ENCODE measurements at regions of chr2 and their contacts with region 1.

Region 1: DNA sequence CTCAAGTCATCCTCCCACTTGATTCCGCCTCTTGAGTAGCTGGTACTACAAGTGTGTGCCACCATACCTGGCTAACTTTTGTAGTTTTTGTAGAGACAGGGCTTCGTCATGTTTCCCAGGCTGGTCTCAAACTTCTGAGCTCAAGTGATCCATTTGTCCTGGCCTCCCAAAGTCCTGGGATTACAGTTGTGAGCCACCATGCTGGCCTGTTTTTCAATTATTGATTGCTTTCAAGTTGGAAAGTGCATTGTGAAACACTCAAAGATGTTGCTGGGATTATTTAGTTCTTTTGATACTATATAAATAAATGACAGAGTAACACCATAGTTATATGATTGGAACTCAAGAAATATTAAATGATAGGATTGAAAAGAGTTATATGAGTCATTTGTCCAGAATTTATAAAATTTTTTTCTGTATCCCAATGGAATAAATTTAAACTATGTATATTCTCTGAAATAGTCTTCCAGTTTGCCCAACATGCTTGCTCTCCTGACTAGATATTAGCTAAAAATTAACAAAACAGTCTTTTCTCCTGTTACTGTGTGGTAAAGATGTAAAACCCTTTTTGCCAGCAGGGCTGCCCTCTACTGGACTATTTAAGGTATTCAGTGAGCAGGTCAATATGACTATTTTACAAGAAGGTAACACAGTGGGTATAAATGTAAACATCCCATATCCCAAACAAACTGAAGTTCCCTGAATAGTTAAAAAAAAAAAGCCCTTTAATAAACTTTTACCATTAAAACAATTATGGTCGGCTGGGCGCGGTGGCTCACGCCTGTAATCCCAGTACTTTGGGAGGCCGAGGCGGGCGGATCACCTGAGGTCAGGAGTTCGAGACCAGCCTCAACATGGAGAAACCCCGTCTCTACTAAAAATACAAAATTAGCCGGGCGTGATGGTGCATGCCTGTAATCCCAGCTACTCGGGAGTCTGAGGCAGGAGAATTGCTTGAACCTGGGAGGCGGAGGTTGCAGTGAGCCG is 42.7 kb downstream of the ACSL3 start:
- DNase-seq: peak; percentile 52 to 73 (median 64)
- H3K4me3 ChIP-seq: no peak overlapping the region
- H3K27ac ChIP-seq: no peak overlapping the region
- H3K4me1 ChIP-seq: no peaks in the 10 kb centered on the region
- H3K27me3 ChIP-seq: no peaks in the 10 kb centered on the region

Region 2: DNA sequence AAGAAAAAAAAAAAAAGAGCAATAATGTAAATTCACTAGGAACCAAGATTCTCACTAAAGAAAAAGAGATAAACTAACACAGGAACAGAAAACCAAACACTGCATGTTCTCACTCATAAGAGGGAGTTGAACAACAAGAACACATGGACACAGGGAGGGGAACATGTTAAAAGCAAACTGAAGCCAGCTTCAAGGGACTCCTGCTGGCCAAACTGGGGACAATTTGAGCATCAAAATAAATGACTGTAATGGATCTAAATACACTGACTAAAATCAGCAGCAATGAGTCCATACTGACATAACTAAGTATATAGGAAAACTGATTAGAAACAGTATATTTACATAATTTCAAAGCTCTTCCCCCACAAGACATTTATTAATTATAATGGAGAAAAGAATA is 320.6 kb before region 1 on chr2:
- CTCF ChIA-PET with region 1: no interaction called
- POLR2A ChIA-PET with region 1: no interaction called
- DNase-seq: peak; percentile 20 to 45 (median 39)
- H3K4me3 ChIP-seq: no peak overlapping the region
- H3K27ac ChIP-seq: no peak overlapping the region
- H3K4me1 ChIP-seq: no peaks in the 10 kb centered on the region
- H3K27me3 ChIP-seq: no peaks in the 10 kb centered on the region

Region 3: GRCh38 chr2:222690564-222691200 is 212.8 kb before region 1 on chr2:
- CTCF ChIA-PET with region 1: interaction called, 11 read pairs
- POLR2A ChIA-PET with region 1: no interaction called
- DNase-seq: peak; percentile 80 to 92 (median 89)
- H3K4me3 ChIP-seq: no peak overlapping the region
- H3K27ac ChIP-seq: no peak overlapping the region
- H3K4me1 ChIP-seq: peaks cover 0 to 8% (median 0%) of the 10 kb centered on the region in 4 experiments
- H3K27me3 ChIP-seq: no peaks in the 10 kb centered on the region

Region 4: DNA sequence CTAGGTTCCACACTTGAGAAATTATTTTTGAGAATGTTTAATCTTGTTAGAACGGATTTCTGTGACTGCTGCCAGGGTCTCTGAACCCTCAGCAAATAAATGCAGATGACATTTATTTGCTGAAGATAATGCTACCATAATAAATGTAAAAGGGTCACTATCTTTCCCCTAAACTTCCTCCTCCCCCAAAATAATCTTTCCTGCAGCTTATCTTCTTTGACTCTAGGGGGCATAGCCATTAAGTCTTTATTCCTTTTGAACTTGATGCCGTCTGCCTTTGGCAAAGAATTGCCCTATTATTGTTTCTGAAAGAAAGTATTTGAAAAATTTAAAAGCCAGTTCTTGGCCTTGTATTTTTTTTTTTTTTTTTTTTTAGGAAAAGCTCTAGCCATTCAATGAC is 106.3 kb before region 1 on chr2:
- CTCF ChIA-PET with region 1: interaction called, 20 read pairs
- POLR2A ChIA-PET with region 1: no interaction called
- DNase-seq: peak; percentile 13 to 47 (median 42)
- H3K4me3 ChIP-seq: no peak overlapping the region
- H3K27ac ChIP-seq: no peak overlapping the region
- H3K4me1 ChIP-seq: peaks cover 0 to 4% (median 0%) of the 10 kb centered on the region in 4 experiments
- H3K27me3 ChIP-seq: peaks cover 0 to 2% (median 0%) of the 10 kb centered on the region in 5 experiments

Region 5: GRCh38 chr2:222939208-222939856 is 35.8 kb after region 1 on chr2:
- CTCF ChIA-PET with region 1: no interaction called
- POLR2A ChIA-PET with region 1: no interaction called
- DNase-seq: peak; percentile 37 to 58 (median 52)
- H3K4me3 ChIP-seq: no peak overlapping the region
- H3K27ac ChIP-seq: no peak overlapping the region
- H3K4me1 ChIP-seq: no peaks in the 10 kb centered on the region
- H3K27me3 ChIP-seq: no peaks in the 10 kb centered on the region

Measured in common myeloid progenitor, CD34-positive (primary cell).